Adrenal gland (tissue), 19 donors: ENCODE measurements at regions of chr19 and their contacts with region 1.

Region 1: GRCh38 chr19:42254989-42255765 is at the start of gene ERF:
- DNase-seq: peak; percentile 93 to 97 (median 95)
- H3K4me3 ChIP-seq: peak within 1 kb of the TSS; percentile 65 to 90 (median 86)
- H3K27ac ChIP-seq: peak within 1 kb of the TSS; percentile 88 to 100 (median 99)
- H3K4me1 ChIP-seq: peaks cover 39 to 42% of the 10 kb centered on the region in 2 donors
- H3K27me3 ChIP-seq: no peaks in the 10 kb centered on the region
- CTCF ChIP-seq: no peak
- POLR2A ChIP-seq: peak; percentile 97 to 99
- total RNA-seq, gene ERF: 11.4 to 71.2 (median 55.0) TPM

Region 2: DNA sequence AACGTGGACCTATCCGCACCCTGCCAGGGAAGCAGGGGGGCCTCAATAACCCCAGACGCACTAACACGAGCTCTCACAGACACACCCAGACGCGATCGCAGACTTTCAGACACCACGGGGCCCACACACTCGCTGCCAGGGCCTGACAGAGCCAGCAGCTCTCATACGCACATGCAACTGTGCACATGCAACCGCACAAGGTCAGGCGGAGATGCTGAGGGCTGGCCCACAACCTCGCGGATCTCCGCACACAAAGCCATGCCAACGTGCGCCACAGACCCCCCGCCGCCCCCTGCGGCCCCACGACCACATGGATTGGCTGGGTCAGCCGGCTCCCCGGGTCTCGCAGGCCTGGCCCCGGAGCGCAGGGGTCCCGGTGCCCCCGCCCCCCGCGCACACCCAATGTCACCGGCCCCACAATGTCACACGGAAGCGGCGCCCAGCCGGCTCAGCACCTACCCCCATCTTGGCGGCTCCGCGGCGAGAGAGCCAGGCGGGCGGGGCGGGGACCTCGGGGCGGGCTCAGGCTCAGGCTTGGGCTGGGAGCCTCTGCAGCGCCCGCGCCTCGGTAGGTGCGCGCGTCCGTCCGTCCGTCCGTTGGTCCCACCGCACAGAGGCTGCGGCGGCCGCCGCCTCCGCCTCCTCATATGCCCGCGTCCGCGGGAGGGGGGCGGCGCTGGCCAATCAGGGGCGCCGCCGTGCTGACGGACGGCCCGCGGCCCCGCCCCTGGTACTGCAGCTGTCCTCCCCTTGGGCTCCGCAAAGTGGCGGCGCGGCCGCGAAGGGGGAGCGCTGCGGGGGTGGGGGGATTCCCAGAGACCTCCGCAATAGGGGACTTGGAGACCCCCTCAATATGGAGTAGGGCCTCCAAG is 261.3 kb before region 1 on chr19 and contains the start of gene ATP1A3:
- intact Hi-C with region 1: no loop called
- DNase-seq: peak in 5 of 7 donors; percentile 16 to 76 (median 40)
- H3K4me3 ChIP-seq: peak within 1 kb of the TSS in 2 of 4 donors; percentile 16 to 50
- H3K27ac ChIP-seq: no peak within 1 kb of the TSS
- H3K4me1 ChIP-seq: peaks cover 0 to 7% of the 10 kb centered on the region in 2 donors
- H3K27me3 ChIP-seq: peaks cover 54% of the 10 kb centered on the region
- CTCF ChIP-seq: no peak
- POLR2A ChIP-seq: no peak
- total RNA-seq, gene ATP1A3: 0.11 to 35.0 (median 3.5) TPM in 8 of 9 donors, not detected in the other

Region 3: DNA sequence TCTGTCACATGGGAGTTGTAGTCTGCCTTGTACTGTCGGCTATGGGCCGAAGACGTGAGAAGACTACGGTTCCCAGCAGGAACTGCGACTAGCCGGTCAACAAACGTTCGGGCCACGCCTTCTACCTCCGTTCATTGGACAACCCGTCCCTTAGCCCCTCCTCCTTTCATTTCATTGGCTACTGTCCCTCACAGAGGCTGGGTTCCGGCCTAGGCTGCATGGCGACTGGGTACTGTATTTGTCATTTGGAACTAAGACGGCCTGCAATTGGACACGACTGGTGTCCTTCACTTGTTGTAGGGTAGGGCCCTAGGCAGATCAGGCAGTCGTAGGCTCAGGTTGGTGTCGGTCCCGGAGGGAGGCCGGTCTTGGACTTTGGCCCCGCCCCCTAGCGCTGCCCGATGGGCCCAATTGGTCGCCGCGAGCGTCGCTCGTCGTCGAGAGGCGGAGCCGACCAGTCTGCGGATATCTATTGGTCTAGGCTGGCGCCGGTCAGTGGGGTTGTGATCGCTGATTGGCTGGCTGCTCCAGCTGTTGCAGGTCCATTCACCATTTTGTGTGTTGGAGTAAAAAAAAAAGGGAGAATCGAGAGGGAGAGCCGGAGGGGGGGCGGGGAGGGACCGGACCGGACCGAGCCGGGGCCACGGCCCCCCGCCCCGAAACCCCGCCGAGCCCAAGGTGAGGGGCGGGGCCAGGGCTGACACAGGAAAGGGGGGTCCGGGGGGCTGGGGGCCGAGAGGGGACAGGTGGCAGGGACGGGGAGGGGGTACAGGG is 13.7 kb after region 1 on chr19 and contains the start of gene CIC:
- intact Hi-C with region 1: loop called in 1 of 2 experiments (anchors 2 kb)
- DNase-seq: peak; percentile 100
- H3K4me3 ChIP-seq: peak within 1 kb of the TSS in 3 of 4 donors; percentile 7 to 81 (median 65)
- H3K27ac ChIP-seq: peak within 1 kb of the TSS; percentile 91 to 99 (median 95)
- H3K4me1 ChIP-seq: peaks cover 24 to 27% of the 10 kb centered on the region in 2 donors
- H3K27me3 ChIP-seq: no peaks in the 10 kb centered on the region
- CTCF ChIP-seq: no peak
- POLR2A ChIP-seq: no peak
- total RNA-seq, gene CIC: 11.9 to 119 (median 72.1) TPM

Region 4: DNA sequence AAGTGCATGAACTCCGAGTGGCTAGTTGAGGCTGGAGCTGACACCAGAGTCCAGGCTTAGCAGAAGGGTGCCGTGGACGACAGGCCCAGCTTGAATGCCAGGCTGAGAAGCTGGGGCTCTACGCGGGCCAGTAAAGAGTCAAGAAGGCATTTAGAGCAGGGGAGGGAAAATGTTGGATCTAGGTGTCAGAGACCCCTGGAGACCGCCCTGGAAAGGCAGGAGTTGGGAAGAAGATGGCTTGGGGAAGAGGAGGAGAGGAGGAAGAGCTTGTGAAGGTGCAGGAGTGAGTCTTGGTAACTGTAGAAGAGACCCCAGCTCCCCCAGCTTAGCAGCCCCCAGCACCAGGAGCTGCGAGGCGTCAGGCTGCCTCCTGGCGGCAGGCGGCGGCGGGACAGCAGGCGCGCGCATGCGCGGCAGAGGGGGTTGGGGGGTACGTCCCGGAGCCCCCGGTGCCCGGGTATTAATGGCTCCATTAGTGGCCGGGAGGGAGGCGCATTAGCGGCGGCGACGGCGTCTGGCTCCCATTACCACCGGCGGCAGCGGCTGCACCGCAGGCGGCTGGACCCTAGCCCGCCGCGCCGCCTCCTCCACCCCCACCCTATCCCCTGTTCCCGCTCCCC is 24.5 kb after region 1 on chr19:
- intact Hi-C with region 1: loop called in 1 of 2 experiments (anchors 2 kb)
- DNase-seq: peak; percentile 64 to 77 (median 70)
- H3K4me3 ChIP-seq: peak overlapping the region; percentile 48 to 81 (median 72)
- H3K27ac ChIP-seq: peak overlapping the region; percentile 69 to 100 (median 87)
- H3K4me1 ChIP-seq: peaks cover 49 to 62% of the 10 kb centered on the region in 2 donors
- H3K27me3 ChIP-seq: no peaks in the 10 kb centered on the region
- CTCF ChIP-seq: peak; percentile 69 to 95 (median 91)
- POLR2A ChIP-seq: peak in 1 of 2 donors; percentile 30